ENCODE measurements at regions of chr2 and their contacts with region 1.

Region 1: DNA sequence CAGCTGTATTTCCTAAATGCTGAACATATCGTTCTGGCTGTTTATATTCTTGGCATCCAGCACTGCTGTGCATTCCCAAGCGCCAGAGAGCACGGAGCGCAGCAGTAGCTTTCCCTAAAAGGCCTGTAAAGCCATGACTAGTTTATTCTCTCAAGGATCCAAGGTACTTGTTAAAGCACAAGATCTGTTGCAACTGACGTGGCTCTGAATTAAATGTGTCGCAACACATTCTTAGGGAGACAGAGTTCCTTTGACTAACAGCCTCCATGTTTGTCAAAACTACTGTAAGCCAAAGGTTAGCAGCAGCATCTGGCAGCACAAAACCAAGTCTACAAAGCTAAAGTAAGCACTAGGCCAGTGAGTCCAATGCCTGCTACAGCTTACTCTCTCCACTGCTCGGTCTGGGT is 188.6 kb upstream of the FN1 start:
- DNase-seq: peak; percentile 92
- H3K4me3 ChIP-seq: no peak overlapping the region
- H3K27ac ChIP-seq: peak overlapping the region; percentile 80 to 89 (median 86)
- H3K4me1 ChIP-seq: peaks cover 0 to 47% (median 36%) of the 10 kb centered on the region in 4 donors
- H3K27me3 ChIP-seq: no peaks in the 10 kb centered on the region
- CTCF ChIP-seq: no peak
- EP300 ChIP-seq: peak; percentile 95 to 99 (median 98)
- POLR2A ChIP-seq: peak in 1 of 2 donors; percentile 13

Region 2: DNA sequence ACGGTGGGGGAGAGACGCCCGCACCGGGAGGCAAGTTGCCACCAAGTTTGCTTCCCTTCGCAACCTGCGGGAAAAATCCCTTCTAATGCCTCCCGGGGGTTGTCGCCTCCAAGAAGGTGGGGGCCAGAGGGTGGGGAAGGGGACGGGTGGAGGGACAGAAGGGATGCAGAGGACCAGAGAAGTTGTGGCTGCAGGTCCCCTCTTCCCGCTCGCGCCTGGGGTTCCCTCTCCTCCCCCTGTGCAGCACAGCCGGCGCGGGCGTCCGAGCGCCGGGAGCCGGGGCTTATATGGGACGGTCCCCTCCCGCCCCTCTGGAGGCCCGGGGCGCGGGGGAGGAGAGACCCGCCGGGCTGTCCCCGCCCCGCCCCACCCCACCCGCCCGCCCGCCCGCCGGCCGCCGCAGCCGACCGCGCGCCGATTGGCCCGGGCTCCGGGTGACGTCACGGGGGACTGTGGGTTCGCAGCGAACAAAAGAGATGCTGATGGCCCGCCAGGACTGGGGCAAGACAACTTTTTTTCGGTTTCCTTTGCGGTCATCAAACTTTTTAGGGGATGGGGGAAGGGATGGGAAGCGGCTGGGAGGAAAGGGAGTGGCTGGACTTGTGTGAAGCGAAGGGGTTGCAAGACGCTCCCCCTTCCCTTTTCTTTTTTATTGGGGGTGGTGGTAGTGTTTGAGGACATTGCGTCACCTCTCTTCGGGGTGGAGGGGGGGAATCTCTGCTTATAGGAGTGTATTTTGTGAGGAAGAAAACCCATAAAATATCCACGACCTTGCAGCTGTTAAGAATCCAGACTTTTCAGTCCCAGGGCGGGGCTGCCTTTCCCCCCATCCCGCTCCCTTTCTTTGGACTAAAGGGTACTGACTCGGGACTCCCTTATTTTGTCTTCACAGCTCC is 188.4 kb before region 1 on chr2 and contains the start of gene FN1:
- intact Hi-C with region 1: loop called (anchors 2 kb)
- DNase-seq: peak; percentile 98
- H3K4me3 ChIP-seq: peak within 1 kb of the TSS; percentile 87 to 97 (median 90)
- H3K27ac ChIP-seq: peak within 1 kb of the TSS; percentile 95 to 99 (median 98)
- H3K4me1 ChIP-seq: peaks cover 0 to 42% (median 21%) of the 10 kb centered on the region in 4 donors
- H3K27me3 ChIP-seq: no peaks in the 10 kb centered on the region
- CTCF ChIP-seq: no peak
- EP300 ChIP-seq: peak in 2 of 4 donors; percentile 42 to 58
- POLR2A ChIP-seq: peak; percentile 79 to 85
- total RNA-seq, gene FN1: 671 to 3,059 (median 1,333) TPM

Region 3: GRCh38 chr2:215664847-215665525 is 40.6 kb after region 1 on chr2:
- intact Hi-C with region 1: loop called (anchors 2 kb)
- DNase-seq: no peak
- H3K4me3 ChIP-seq: no peak overlapping the region
- H3K27ac ChIP-seq: peak overlapping the region; percentile 45 to 80 (median 68)
- H3K4me1 ChIP-seq: peaks cover 0 to 71% (median 43%) of the 10 kb centered on the region in 4 donors
- H3K27me3 ChIP-seq: no peaks in the 10 kb centered on the region
- CTCF ChIP-seq: no peak
- EP300 ChIP-seq: no peak
- POLR2A ChIP-seq: no peak

Region 4: GRCh38 chr2:215717501-215718381 is 93.3 kb after region 1 on chr2:
- intact Hi-C with region 1: loop called (anchors 2 kb)
- DNase-seq: no peak
- H3K4me3 ChIP-seq: no peak overlapping the region
- H3K27ac ChIP-seq: peak overlapping the region; percentile 17 to 85 (median 62)
- H3K4me1 ChIP-seq: peaks cover 0 to 52% (median 38%) of the 10 kb centered on the region in 4 donors
- H3K27me3 ChIP-seq: no peaks in the 10 kb centered on the region
- CTCF ChIP-seq: no peak
- EP300 ChIP-seq: no peak
- POLR2A ChIP-seq: no peak

Region 5: DNA sequence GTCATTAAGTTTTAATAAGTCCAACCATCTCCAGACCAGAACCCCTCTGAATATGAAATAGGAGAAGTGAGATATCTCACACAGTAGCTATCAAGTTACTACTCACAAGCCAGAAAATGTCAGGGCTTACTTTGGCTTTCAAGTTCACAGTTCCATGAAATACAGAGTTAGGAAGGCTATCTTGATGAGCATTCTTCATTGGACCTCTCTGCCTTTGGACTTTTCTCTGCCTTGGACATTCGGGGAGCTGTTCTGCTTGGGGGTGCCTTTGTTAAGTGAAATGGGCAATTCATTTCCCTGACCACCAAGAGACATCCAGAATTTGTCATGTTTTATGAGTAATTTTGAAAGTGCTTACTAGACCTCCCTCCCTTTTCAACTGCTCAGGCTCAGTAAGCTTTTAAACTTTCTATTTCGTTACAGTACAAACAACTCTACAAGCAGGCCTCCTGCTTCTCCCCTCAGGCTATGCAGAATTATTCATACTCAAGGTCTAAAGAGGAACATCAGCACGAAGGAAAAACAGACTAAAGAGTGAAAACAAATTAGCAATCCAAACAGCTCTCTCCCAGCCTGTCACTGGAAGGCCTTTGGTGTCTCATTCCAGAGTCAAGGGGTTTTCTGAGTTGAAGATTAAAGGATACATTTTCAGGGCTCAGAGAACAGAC is 293.7 kb after region 1 on chr2:
- intact Hi-C with region 1: loop called (anchors 5 kb)
- DNase-seq: no peak
- H3K4me3 ChIP-seq: no peak overlapping the region
- H3K27ac ChIP-seq: peak overlapping the region; percentile 43 to 75 (median 64)
- H3K4me1 ChIP-seq: peaks cover 0 to 34% (median 29%) of the 10 kb centered on the region in 4 donors
- H3K27me3 ChIP-seq: no peaks in the 10 kb centered on the region
- CTCF ChIP-seq: no peak
- EP300 ChIP-seq: no peak
- POLR2A ChIP-seq: no peak